Right lobe of liver (tissue), 6 donors: ENCODE measurements at regions of chr20 and their contacts with region 1.

Region 1: DNA sequence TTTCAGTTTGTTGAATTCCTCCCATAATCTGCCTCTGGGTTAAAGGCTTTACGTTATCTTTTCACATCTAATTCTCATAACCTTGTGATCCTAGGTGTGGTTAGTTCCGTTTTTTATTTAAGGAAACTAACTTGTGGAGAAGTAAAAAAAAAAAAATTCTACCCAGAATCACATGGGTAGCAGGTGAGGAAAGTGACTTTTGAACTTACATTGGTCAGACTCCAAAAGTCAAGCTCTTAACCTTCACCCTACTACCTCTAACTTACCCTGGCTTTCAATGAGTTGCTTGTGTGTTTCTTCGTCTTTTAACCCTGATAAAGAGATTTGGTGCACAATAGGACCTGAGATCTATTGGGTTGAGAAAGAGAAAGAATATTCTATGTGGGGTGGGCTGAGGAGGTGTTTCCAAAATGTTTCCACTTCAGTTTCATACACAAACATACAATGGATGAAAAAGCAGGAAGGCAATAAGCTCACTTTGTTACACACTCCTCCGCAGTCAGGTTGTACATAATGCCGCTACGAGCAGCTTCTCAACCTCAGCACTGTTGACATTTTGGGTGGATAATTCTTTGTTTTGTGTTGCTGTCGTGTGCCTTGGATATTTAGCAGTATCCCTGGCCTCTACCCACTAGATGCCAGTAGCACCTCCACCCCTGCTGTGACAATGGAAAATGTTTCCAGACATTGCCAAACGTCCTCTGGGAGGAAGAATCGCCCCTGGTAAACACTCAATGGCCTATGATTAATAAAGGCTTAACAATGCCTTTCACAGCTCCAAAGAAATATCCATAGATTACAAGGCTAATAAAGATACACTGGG is 193.0 kb upstream of the ZNF217 start:
- DNase-seq: peak in 1 of 3 donors; percentile 46
- ATAC-seq: peak; percentile 87 to 93 (median 91)
- H3K4me3 ChIP-seq: no peak overlapping the region
- H3K27ac ChIP-seq: peak overlapping the region; percentile 28 to 85 (median 83)
- H3K4me1 ChIP-seq: peaks cover 0 to 21% (median 7%) of the 10 kb centered on the region in 4 donors
- H3K27me3 ChIP-seq: no peaks in the 10 kb centered on the region
- CTCF ChIP-seq: peak in 2 of 4 donors; percentile 27 to 28
- POLR2A ChIP-seq: no peak

Region 2: GRCh38 chr20:53609491-53610445 is 176.9 kb before region 1 on chr20:
- intact Hi-C with region 1: no loop called
- DNase-seq: peak in 2 of 3 donors; percentile 51 to 64
- ATAC-seq: peak; percentile 45 to 62 (median 48)
- H3K4me3 ChIP-seq: peak overlapping the region in 1 of 3 donors; percentile 0
- H3K27ac ChIP-seq: peak overlapping the region; percentile 25 to 61 (median 47)
- H3K4me1 ChIP-seq: peaks cover 0 to 6% (median under 1%) of the 10 kb centered on the region in 4 donors
- H3K27me3 ChIP-seq: no peaks in the 10 kb centered on the region
- CTCF ChIP-seq: no peak
- POLR2A ChIP-seq: no peak

Region 3: GRCh38 chr20:53711394-53712211 is 75.1 kb before region 1 on chr20:
- intact Hi-C with region 1: loop called in 1 of 2 experiments (anchors 10 kb)
- DNase-seq: peak; percentile 60 to 72 (median 65)
- ATAC-seq: peak; percentile 73 to 78 (median 74)
- H3K4me3 ChIP-seq: no peak overlapping the region
- H3K27ac ChIP-seq: peak overlapping the region; percentile 81 to 91 (median 89)
- H3K4me1 ChIP-seq: peaks cover 0 to 34% (median 14%) of the 10 kb centered on the region in 4 donors
- H3K27me3 ChIP-seq: no peaks in the 10 kb centered on the region
- CTCF ChIP-seq: no peak
- POLR2A ChIP-seq: no peak